H1 (cell line): ENCODE measurements at regions of chr11 and their contacts with region 1.

Region 1: DNA sequence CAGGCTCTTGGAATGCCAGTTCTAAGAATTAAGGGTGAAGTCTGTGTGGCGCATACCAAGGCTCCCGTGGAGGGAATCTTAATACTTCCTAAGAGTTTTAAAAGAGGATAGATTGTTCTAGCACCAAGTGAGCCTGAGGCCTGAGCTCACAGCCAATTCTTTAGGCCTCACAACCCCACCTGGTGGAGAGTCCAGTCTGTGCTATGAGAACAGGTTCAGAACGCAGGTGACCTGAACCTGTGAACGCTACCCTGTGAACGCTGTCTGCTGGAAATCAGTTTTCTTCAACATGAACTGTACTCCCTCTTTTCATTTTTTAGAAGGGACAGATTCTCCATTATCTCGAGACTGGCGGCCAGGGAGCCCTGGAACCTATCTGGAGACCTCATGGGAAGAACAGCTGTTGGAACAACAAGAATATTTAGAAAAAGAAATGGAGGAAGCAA is 43.2 kb upstream of the DLAT start:
- DNase-seq: peak; percentile 61 to 81
- H3K4me3 ChIP-seq: peak overlapping the region in 2 of 4 experiments; percentile 3 to 46; a peak in 3 of 8 replicates
- H3K27ac ChIP-seq: no peak overlapping the region
- H3K4me1 ChIP-seq: peaks cover 14 to 20% (median 19%) of the 10 kb centered on the region in 4 experiments; a peak in 6 of 7 replicates
- H3K27me3 ChIP-seq: no peaks in the 10 kb centered on the region; a peak in 1 of 7 replicates
- CTCF ChIP-seq: peak; percentile 82 to 94 (median 86)
- EP300 ChIP-seq: no peak
- POLR2A ChIP-seq: no peak
- RAD21 ChIP-seq: peak; percentile 85 to 86

Region 2: DNA sequence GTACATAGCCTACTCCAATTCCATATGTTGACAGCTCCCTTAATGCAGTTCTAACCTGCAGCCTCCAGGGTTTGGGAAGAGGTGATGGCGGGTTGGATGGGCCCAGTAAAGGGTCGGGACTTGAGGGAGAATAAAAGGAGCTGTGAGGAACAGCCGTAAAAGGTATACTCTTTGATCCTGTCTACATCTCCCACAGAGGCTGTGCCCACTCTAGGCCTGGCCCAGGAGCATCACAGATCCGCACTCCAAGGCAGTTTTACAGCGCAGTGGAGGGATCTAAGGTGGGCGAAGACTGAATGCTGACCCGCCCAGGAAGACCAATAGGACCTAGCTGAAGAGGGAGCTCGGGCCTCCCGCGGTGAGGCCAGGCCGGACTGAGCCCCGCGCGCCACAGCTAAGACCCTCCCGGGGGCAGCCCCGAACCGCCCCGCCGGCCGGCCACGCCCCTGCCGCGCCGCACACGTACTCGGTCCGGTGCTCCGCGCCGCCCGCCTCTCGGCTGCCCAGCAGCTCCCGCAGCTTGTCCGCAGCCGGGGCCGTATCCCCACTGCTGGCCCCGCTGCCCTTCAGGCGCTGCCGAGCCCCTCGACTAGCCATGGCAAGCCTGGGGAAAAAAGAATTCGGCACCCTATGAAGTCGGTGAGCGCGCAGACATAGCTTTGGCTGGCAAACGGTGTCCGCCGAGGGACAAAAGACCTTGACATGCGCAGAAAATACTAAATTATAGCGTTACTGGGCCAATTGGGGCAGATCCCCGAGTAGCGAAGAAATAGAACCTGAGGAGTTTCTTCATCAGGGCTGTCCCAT is 111.0 kb before region 1 on chr11 and contains the start of gene ALG9:
- CTCF ChIA-PET with region 1: interaction called, 36 read pairs
- POLR2A ChIA-PET with region 1: interaction called, 7 read pairs
- DNase-seq: peak; percentile 31 to 90
- H3K4me3 ChIP-seq: peak within 1 kb of the TSS; percentile 69 to 88 (median 84)
- H3K27ac ChIP-seq: no peak within 1 kb of the TSS; the same call in 1 of the 2 replicates
- H3K4me1 ChIP-seq: no peaks in the 10 kb centered on the region; a peak in 1 of 7 replicates
- H3K27me3 ChIP-seq: no peaks in the 10 kb centered on the region; a peak in 1 of 7 replicates
- CTCF ChIP-seq: peak; percentile 12 to 37 (median 18); a peak in 3 of 4 replicates
- EP300 ChIP-seq: no peak
- POLR2A ChIP-seq: peak in 1 of 2 experiments; percentile 64; a peak in 2 of 3 replicates
- RAD21 ChIP-seq: no peak
- total RNA-seq, gene ALG9: 16.4 and 23.5 TPM in 2 replicates

Region 3: GRCh38 chr11:111911563-111912401 is 70.3 kb before region 1 on chr11 and contains the start of gene CRYAB:
- CTCF ChIA-PET with region 1: interaction called, 27 read pairs
- POLR2A ChIA-PET with region 1: interaction called, 3 read pairs
- DNase-seq: no peak
- H3K4me3 ChIP-seq: no peak within 1 kb of the TSS; a peak in 1 of 8 replicates
- H3K27ac ChIP-seq: no peak within 1 kb of the TSS
- H3K4me1 ChIP-seq: peaks cover 0 to 15% (median 9%) of the 10 kb centered on the region in 4 experiments
- H3K27me3 ChIP-seq: no peaks in the 10 kb centered on the region
- CTCF ChIP-seq: no peak
- EP300 ChIP-seq: no peak
- POLR2A ChIP-seq: no peak
- RAD21 ChIP-seq: no peak
- total RNA-seq, gene CRYAB: 2.0 and 4.0 TPM in 2 replicates

Region 4: GRCh38 chr11:111938687-111939160 is 43.3 kb before region 1 on chr11:
- CTCF ChIA-PET with region 1: interaction called, 565 read pairs
- POLR2A ChIA-PET with region 1: interaction called, 22 read pairs
- DNase-seq: no peak
- H3K4me3 ChIP-seq: peak overlapping the region in 2 of 4 experiments; percentile 2 to 70; a peak in 2 of 8 replicates
- H3K27ac ChIP-seq: no peak overlapping the region
- H3K4me1 ChIP-seq: peaks cover 12 to 22% (median 12%) of the 10 kb centered on the region in 4 experiments
- H3K27me3 ChIP-seq: no peaks in the 10 kb centered on the region
- CTCF ChIP-seq: no peak
- EP300 ChIP-seq: no peak
- POLR2A ChIP-seq: peak in 1 of 2 experiments; percentile 24; a peak in 1 of 3 replicates
- RAD21 ChIP-seq: no peak

Region 5: DNA sequence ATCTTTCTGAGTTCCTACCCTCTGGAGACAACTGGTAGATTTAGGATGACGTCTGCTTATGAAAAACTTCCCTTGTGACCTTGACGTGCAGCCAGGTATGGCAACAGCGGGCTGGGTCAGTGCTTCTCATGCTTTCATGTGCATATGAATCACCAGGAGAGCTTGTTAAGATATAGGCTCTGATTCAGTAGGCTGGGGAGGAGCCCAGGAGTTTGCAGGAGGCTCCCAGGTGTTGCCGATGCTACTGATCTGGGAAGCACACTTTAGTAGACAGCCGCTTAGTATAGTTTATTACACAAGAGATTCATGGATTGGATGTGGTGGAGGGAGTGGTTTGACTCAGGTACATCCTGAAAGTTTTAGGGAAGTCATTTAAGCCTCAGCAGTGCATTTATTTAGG is 21.1 kb before region 1 on chr11:
- CTCF ChIA-PET with region 1: interaction called, 83 read pairs
- POLR2A ChIA-PET with region 1: interaction called, 5 read pairs
- DNase-seq: no peak
- H3K4me3 ChIP-seq: peak overlapping the region in 1 of 4 experiments; percentile 13; a peak in 1 of 8 replicates
- H3K27ac ChIP-seq: no peak overlapping the region
- H3K4me1 ChIP-seq: peaks cover 0 to 10% (median 3%) of the 10 kb centered on the region in 4 experiments; a peak in 3 of 7 replicates
- H3K27me3 ChIP-seq: no peaks in the 10 kb centered on the region
- CTCF ChIP-seq: no peak
- EP300 ChIP-seq: no peak
- POLR2A ChIP-seq: peak in 1 of 2 experiments; percentile 21; a peak in 1 of 3 replicates
- RAD21 ChIP-seq: no peak

Region 6: DNA sequence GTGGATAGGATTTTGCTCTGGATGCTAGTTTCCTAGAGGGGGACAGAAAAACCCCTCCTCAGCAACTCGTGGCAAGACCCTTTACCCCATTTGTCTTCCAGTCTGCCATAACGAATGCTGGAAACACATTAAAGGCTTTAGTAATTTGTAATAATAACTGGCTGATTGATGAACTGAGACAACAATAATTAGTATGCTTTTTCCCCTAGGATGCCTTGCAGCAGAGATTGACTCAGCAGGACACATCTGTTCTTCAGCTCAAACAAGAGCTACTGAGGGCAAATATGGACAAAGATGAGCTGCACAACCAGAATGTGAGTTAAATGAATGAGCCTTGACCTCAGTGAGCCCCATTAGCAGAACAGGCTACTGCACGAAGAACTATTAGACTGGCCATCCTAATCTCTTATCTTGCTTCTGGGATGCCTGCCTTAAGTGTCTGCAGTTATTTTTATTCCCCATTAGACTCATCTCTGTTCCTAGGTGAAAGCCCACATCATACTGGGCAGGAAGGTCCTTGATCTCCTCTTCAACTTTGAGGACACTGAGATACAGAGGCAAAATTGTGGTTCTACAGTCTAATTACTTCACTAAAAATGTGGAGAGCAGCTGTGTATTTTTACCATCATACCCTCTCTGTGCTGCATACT is 10.3 kb after region 1 on chr11:
- CTCF ChIA-PET with region 1: interaction called, 40 read pairs
- POLR2A ChIA-PET with region 1: no interaction called
- DNase-seq: no peak
- H3K4me3 ChIP-seq: no peak overlapping the region
- H3K27ac ChIP-seq: no peak overlapping the region
- H3K4me1 ChIP-seq: no peaks in the 10 kb centered on the region
- H3K27me3 ChIP-seq: no peaks in the 10 kb centered on the region
- CTCF ChIP-seq: no peak
- EP300 ChIP-seq: no peak
- POLR2A ChIP-seq: no peak
- RAD21 ChIP-seq: no peak